ENCODE measurements at regions of chr12 and their contacts with region 1.

Region 1: DNA sequence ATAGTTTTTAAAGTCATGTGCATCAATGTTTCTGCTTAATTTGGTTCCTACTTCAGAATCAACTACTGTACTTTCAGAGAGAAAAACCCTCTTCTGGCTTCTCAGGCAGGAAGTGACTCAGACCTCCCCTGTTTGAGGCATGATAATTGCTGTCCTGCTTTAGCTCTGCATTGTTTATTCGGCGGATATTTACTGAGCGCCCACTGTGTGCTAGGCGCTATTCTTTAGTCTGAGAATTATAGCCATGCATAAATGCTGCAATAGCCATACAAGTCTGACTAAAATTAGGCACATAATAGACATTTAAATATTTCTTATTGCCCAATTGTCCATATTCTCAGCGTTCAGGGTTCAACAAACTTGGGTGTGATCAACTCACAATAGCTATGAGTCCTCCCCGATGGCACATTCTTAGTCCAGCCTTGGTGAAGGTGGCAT is 6.1 kb upstream of the AMIGO2 start:
- DNase-seq: no peak
- H3K4me3 ChIP-seq: no peak overlapping the region
- H3K27ac ChIP-seq: peak overlapping the region in 3 of 4 donors; percentile 96 to 99 (median 97)
- H3K4me1 ChIP-seq: peaks cover 0 to 89% (median 62%) of the 10 kb centered on the region in 4 donors
- H3K27me3 ChIP-seq: no peaks in the 10 kb centered on the region
- CTCF ChIP-seq: no peak
- EP300 ChIP-seq: no peak
- POLR2A ChIP-seq: no peak

Region 2: GRCh38 chr12:47041327-47041726 is 44.5 kb before region 1 on chr12:
- intact Hi-C with region 1: no loop called
- DNase-seq: no peak
- H3K4me3 ChIP-seq: no peak overlapping the region
- H3K27ac ChIP-seq: no peak overlapping the region
- H3K4me1 ChIP-seq: no peaks in the 10 kb centered on the region
- H3K27me3 ChIP-seq: no peaks in the 10 kb centered on the region
- CTCF ChIP-seq: no peak
- EP300 ChIP-seq: no peak
- POLR2A ChIP-seq: no peak

Region 3: DNA sequence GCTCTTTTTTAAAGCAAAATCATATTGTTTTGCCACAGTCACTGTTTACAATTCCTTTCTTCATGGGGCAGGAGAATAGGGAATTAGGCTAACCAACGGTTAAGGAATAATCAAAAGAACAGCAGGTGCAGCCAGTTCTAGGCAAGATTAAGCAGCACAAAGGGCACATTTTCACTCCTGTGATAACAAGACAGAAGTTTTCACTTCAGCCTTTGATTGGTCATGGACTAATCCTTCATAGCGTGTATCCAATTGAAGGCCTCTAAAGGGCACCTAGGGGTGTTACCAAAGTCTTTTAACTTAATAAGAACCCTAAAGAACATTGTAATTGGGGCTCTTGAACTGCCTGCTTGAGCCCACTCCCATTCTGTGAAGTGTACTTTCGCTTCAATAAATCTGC is 200.8 kb after region 1 on chr12:
- intact Hi-C with region 1: no loop called
- DNase-seq: no peak
- H3K4me3 ChIP-seq: no peak overlapping the region
- H3K27ac ChIP-seq: no peak overlapping the region
- H3K4me1 ChIP-seq: no peaks in the 10 kb centered on the region
- H3K27me3 ChIP-seq: no peaks in the 10 kb centered on the region
- CTCF ChIP-seq: no peak
- EP300 ChIP-seq: no peak
- POLR2A ChIP-seq: no peak

Region 4: DNA sequence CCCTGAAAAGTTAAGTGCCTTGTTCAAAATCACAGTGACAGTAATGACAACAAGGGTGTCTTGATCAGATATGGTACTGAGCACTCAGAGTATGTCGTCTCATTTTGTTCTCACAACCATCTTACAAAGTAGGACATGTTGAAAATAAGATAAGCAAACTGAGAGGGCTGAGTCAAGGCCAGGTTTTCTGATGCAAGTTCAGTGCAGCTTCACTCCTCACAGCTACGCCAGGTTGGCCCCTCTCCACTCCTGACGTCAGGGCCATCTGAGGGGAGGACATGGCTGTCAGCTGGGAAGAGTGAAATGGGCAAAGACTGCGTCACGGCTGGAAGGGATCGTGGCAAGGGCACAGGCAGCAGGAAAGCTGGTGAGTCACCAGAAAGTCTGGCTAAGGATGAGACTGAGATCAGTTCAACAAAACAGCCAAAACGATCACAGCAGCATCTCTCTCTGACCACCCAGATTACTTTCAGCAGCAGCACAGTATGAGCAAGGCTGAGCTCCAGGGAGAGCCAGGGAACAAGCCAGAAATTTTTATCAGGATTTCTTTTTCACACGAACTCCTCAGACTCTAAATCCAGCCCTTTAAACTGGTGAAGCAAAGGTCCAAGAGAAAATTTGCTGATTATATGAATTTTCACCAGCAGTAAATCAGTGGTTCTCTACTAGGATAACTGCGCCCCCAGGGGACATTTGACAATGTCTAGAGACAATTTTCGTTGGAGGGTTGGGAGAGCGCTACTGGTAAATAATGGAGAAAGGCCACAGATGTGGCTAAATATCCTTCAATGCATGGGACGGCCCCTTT is 291.8 kb after region 1 on chr12:
- intact Hi-C with region 1: loop called (anchors 5 kb)
- DNase-seq: peak; percentile 99
- H3K4me3 ChIP-seq: peak overlapping the region in 1 of 4 donors; percentile 1
- H3K27ac ChIP-seq: peak overlapping the region; percentile 70 to 89 (median 76)
- H3K4me1 ChIP-seq: peaks cover 0 to 27% (median 16%) of the 10 kb centered on the region in 4 donors
- H3K27me3 ChIP-seq: no peaks in the 10 kb centered on the region
- CTCF ChIP-seq: no peak
- EP300 ChIP-seq: peak; percentile 94 to 98 (median 98)
- POLR2A ChIP-seq: no peak

Region 5: DNA sequence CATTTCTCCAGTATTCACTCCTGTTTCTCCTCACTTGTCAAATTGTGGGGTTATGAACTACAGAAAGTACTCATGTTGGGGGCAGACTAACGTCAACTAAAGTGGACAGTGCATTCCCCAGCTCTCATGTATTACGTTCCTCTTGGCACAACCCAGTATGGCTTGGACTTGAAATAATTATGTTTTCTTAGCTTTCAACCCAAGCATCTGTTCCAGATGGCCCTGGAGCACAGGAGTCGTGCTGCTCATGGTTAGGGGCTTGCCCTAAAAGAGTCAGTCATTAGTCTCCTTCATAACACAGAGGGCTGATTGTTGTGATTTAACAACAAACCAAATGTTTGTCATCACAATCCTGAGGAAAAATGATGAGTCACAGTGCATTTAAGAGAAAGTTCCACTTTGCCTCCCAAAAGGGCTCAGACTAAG is 465.6 kb after region 1 on chr12:
- intact Hi-C with region 1: loop called (anchors 5 kb)
- DNase-seq: no peak
- H3K4me3 ChIP-seq: no peak overlapping the region
- H3K27ac ChIP-seq: peak overlapping the region in 3 of 4 donors; percentile 77 to 86 (median 84)
- H3K4me1 ChIP-seq: peaks cover 0 to 55% (median 39%) of the 10 kb centered on the region in 4 donors
- H3K27me3 ChIP-seq: no peaks in the 10 kb centered on the region
- CTCF ChIP-seq: no peak
- EP300 ChIP-seq: peak; percentile 36 to 93 (median 82)
- POLR2A ChIP-seq: no peak

Measured in sigmoid colon (tissue), 7 donors.